ENCODE measurements at regions of chr1 and their contacts with region 1.

Region 1: DNA sequence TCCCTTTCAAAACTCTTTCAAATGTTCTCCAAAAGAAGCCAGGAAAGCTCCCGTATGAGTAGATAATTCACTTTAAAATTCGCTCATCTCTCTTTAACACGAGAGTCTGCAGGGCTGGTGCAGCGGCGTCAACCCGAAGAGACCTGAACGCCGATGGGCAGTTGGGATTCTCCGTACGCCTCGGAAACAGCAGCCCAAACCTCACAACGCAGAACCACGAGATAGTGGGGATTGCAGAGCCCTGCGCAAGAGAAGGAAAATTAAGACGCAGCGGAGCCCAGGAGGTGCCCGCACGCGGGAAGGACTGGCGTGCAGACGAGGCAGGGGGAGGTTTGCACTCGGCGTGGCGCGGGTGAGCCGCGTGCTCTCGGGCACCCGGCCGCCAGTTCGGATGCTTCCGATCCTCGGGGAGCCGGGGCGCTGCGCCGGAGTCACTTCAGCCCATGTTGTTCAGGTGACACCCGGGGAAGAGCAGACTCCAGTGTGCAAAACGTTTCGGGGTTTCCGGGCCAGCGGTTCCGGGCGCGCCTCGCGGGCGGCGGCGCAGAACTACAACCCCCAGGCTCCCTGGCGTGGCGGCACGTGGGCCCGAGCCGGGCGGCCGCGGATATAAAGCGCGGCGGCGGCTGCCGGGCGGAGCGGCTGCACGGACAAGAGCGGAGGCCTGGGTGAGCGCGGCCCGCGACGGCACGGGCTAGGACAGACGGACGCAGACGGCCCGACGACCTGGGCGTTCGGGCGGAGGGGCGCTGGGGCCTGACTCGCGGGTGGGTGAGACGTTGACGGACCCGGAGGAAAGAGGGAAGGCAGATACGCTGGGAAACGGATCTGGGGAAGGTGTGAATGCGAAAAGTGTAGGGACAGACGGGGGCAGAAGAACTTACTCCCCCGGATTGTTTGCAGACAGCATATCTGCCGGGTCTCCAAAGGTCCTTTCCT is at the start of gene NPL:
- DNase-seq: peak; percentile 88
- ATAC-seq: peak; percentile 95
- H3K4me3 ChIP-seq: peak within 1 kb of the TSS; percentile 49 to 70 (median 63)
- H3K4me3 Mint-ChIP-seq: peak within 1 kb of the TSS; percentile 90
- H3K27ac ChIP-seq: peak within 1 kb of the TSS in 1 of 2 donors; percentile 63
- H3K27ac Mint-ChIP-seq: peak within 1 kb of the TSS; percentile 87
- H3K4me1 ChIP-seq: peaks cover 9 to 11% of the 10 kb centered on the region in 2 donors
- H3K4me1 Mint-ChIP-seq: peaks cover 16% of the 10 kb centered on the region
- H3K27me3 ChIP-seq: peaks cover 0 to 6% (median 0%) of the 10 kb centered on the region in 4 experiments
- H3K27me3 Mint-ChIP-seq: peaks cover 3% of the 10 kb centered on the region
- CTCF ChIP-seq: no peak
- total RNA-seq, gene NPL: 3.4 and 5.9 TPM in 2 replicates

Region 2: DNA sequence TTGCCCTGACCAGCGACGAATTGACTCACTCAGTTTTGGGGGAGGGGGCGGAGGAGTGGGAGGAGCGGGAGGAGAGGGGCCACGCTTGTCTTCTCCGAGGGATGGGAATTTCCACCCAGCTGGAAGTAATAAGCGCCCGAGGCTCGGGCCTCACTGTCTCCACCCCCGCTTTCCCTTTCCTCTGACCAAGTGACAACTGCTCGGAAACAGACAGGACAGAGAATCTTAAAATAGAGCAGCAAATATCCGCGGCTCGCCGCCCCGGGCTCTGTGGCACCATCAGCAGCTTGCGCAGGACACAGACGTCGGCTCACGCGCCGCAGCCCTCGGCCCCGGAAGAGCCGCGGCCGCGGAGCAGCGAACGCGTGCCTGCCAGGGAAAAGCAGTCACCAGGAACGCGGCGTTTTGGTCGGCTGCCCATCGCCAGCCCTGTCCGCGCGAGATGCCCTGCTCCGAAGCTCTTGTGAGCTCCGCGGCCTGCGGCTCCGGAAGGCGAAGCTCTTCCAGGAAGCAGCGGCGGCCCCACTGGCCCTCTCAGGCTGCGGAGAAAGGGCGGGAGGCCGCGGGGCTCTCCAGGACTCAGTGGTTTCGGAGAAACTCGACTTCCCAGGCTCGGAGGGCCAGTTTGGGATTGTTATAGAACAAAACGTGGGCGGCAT is 174.5 kb before region 1 on chr1:
- CTCF ChIA-PET with region 1: interaction called, 19 read pairs
- POLR2A ChIA-PET with region 1: no interaction called
- intact Hi-C with region 1: loop called (anchors 5 kb)
- DNase-seq: peak; percentile 83
- ATAC-seq: peak; percentile 73
- H3K4me3 ChIP-seq: peak overlapping the region; percentile 50 to 89 (median 63)
- H3K4me3 Mint-ChIP-seq: peak overlapping the region; percentile 92
- H3K27ac ChIP-seq: peak overlapping the region in 1 of 2 donors; percentile 71
- H3K27ac Mint-ChIP-seq: peak overlapping the region; percentile 77
- H3K4me1 ChIP-seq: peaks cover 25 to 28% of the 10 kb centered on the region in 2 donors
- H3K4me1 Mint-ChIP-seq: peaks cover 29% of the 10 kb centered on the region
- H3K27me3 ChIP-seq: peaks cover 2 to 38% (median 11%) of the 10 kb centered on the region in 4 experiments
- H3K27me3 Mint-ChIP-seq: peaks cover 8% of the 10 kb centered on the region
- CTCF ChIP-seq: no peak

Region 3: GRCh38 chr1:183101841-183102276 is 312.5 kb after region 1 on chr1:
- CTCF ChIA-PET with region 1: no interaction called
- POLR2A ChIA-PET with region 1: no interaction called
- intact Hi-C with region 1: no loop called
- DNase-seq: peak; percentile 57
- ATAC-seq: peak; percentile 69
- H3K4me3 ChIP-seq: no peak overlapping the region
- H3K4me3 Mint-ChIP-seq: peak overlapping the region; percentile 42
- H3K27ac ChIP-seq: no peak overlapping the region
- H3K27ac Mint-ChIP-seq: peak overlapping the region; percentile 38
- H3K4me1 ChIP-seq: peaks cover 11 to 13% of the 10 kb centered on the region in 2 donors
- H3K4me1 Mint-ChIP-seq: peaks cover 18% of the 10 kb centered on the region
- H3K27me3 ChIP-seq: no peaks in the 10 kb centered on the region
- H3K27me3 Mint-ChIP-seq: no peaks in the 10 kb centered on the region
- CTCF ChIP-seq: no peak